B cell (primary cell): ENCODE measurements at regions of chr1 and their contacts with region 1.

Region 1: GRCh38 chr1:23184212-23184934 is 15.7 kb upstream of the LUZP1 start:
- DNase-seq: peak; percentile 76
- ATAC-seq: no peak
- H3K4me3 ChIP-seq: peak overlapping the region in 3 of 5 experiments; percentile 13 to 59 (median 39)
- H3K4me3 Mint-ChIP-seq: peak overlapping the region; percentile 72
- H3K27ac ChIP-seq: no peak overlapping the region
- H3K27ac Mint-ChIP-seq: no peak overlapping the region
- H3K4me1 ChIP-seq: peaks cover 3 to 8% of the 10 kb centered on the region in 2 donors
- H3K4me1 Mint-ChIP-seq: peaks cover 9% of the 10 kb centered on the region
- H3K27me3 ChIP-seq: peaks cover 0 to 2% (median 0%) of the 10 kb centered on the region in 4 experiments
- H3K27me3 Mint-ChIP-seq: no peaks in the 10 kb centered on the region
- CTCF ChIP-seq: peak; percentile 83

Region 2: DNA sequence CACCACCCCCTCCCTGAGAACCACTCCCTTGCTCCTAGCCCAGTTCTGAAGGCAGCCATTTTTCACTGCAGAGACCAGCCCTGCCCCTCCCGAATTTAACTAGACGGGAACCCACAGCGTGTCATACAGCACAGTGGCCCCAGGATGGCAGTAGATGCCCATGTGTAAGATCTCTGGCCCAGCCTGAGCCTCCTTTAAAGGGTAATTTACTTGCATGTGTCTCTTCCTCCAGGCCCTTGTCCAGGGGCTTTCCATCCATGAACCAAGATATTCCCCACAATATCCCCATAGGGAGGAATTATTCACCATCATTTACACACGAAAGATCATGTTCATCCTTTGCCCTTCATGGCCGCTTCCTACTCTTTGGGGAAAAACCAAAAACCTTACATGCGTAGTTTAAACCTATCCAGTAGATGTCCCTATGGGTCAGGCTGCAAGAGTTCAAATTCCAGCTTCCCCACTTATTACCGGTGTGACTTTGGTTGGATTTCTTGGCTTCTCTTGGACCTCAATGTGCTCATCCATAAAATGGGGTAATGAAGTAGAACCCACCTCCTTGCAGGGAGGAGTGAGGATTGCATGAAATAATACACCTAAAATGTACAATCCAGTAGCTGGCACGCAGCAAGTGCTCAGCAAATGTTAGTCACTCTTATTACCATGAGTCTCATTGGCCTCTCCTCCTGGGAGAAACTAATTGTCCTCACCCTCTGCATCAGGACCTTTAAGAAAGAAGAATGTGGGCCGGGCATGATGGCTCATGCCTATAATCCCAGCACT is 207.7 kb before region 1 on chr1:
- CTCF ChIA-PET with region 1: interaction called, 38 read pairs
- POLR2A ChIA-PET with region 1: no interaction called
- intact Hi-C with region 1: no loop called
- DNase-seq: peak; percentile 59
- ATAC-seq: peak; percentile 84
- H3K4me3 ChIP-seq: no peak overlapping the region
- H3K4me3 Mint-ChIP-seq: no peak overlapping the region
- H3K27ac ChIP-seq: no peak overlapping the region
- H3K27ac Mint-ChIP-seq: no peak overlapping the region
- H3K4me1 ChIP-seq: no peaks in the 10 kb centered on the region
- H3K4me1 Mint-ChIP-seq: no peaks in the 10 kb centered on the region
- H3K27me3 ChIP-seq: peaks cover 0 to 8% (median 0%) of the 10 kb centered on the region in 4 experiments
- H3K27me3 Mint-ChIP-seq: peaks cover 34% of the 10 kb centered on the region
- CTCF ChIP-seq: peak; percentile 71

Region 3: GRCh38 chr1:23118957-23119792 is 65.2 kb before region 1 on chr1:
- CTCF ChIA-PET with region 1: interaction called, 103 read pairs
- POLR2A ChIA-PET with region 1: interaction called, 8 read pairs
- intact Hi-C with region 1: no loop called
- DNase-seq: no peak
- ATAC-seq: no peak
- H3K4me3 ChIP-seq: peak overlapping the region in 1 of 5 experiments; percentile 31
- H3K4me3 Mint-ChIP-seq: peak overlapping the region; percentile 33
- H3K27ac ChIP-seq: no peak overlapping the region
- H3K27ac Mint-ChIP-seq: peak overlapping the region; percentile 41
- H3K4me1 ChIP-seq: peaks cover 20 to 24% of the 10 kb centered on the region in 2 donors
- H3K4me1 Mint-ChIP-seq: peaks cover 49% of the 10 kb centered on the region
- H3K27me3 ChIP-seq: no peaks in the 10 kb centered on the region
- H3K27me3 Mint-ChIP-seq: no peaks in the 10 kb centered on the region
- CTCF ChIP-seq: no peak

Region 4: GRCh38 chr1:23152966-23153684 is 31.2 kb before region 1 on chr1:
- CTCF ChIA-PET with region 1: interaction called, 20 read pairs
- POLR2A ChIA-PET with region 1: no interaction called
- intact Hi-C with region 1: no loop called
- DNase-seq: no peak
- ATAC-seq: no peak
- H3K4me3 ChIP-seq: no peak overlapping the region
- H3K4me3 Mint-ChIP-seq: no peak overlapping the region
- H3K27ac ChIP-seq: no peak overlapping the region
- H3K27ac Mint-ChIP-seq: no peak overlapping the region
- H3K4me1 ChIP-seq: peaks cover 3 to 5% of the 10 kb centered on the region in 2 donors
- H3K4me1 Mint-ChIP-seq: peaks cover 10% of the 10 kb centered on the region
- H3K27me3 ChIP-seq: no peaks in the 10 kb centered on the region
- H3K27me3 Mint-ChIP-seq: no peaks in the 10 kb centered on the region
- CTCF ChIP-seq: no peak

Region 5: GRCh38 chr1:23168457-23169194 is 15.7 kb before region 1 on chr1 and contains the start of gene LUZP1:
- CTCF ChIA-PET with region 1: interaction called, 26 read pairs
- POLR2A ChIA-PET with region 1: interaction called, 4 read pairs
- intact Hi-C with region 1: no loop called
- DNase-seq: peak; percentile 89
- ATAC-seq: peak; percentile 89
- H3K4me3 ChIP-seq: peak within 1 kb of the TSS; percentile 68 to 99 (median 80)
- H3K4me3 Mint-ChIP-seq: peak within 1 kb of the TSS; percentile 93
- H3K27ac ChIP-seq: peak within 1 kb of the TSS; percentile 32 to 69
- H3K27ac Mint-ChIP-seq: peak within 1 kb of the TSS; percentile 89
- H3K4me1 ChIP-seq: peaks cover 19 to 23% of the 10 kb centered on the region in 2 donors
- H3K4me1 Mint-ChIP-seq: peaks cover 25% of the 10 kb centered on the region
- H3K27me3 ChIP-seq: no peaks in the 10 kb centered on the region
- H3K27me3 Mint-ChIP-seq: no peaks in the 10 kb centered on the region
- CTCF ChIP-seq: no peak
- total RNA-seq, gene LUZP1: 12.8 and 12.9 TPM in 2 replicates